Right ventricle myocardium inferior (tissue), 1 donor: ENCODE measurements at regions of chr20 and their contacts with region 1.

Region 1: DNA sequence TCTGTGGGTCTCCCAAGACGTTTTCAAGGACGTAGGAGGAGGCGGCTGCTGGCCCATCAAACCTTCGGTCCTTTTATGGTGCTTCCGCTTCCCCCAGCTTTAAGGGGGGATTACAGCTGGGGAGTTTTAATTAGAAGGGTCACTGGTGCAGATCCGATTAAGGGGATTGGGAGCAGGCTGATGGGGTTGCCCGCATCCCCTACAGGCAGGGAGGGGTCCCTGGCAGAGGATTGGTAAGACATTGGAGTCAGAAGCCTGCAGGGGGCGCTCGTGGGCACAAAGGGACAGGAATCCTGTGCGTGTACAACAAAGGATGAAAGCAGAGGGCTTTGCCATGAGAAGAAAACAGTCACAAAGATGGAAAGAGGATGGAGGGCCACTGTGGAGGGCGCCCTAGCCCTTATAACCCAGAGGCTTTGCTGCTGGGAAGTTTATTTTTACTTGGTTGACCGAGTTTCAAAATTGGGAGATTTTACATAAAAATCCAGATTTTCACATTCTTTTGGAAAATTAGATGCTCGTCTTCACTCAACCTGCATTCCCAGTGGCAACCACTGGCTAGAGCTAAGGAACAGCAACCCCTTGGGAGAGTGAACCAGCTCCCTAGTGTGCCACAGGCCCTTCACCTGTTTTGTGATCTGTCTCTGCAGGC is 97.9 kb downstream of the KCNB1 start:
- DNase-seq: peak; percentile 89
- ATAC-seq: no peak

Region 2: DNA sequence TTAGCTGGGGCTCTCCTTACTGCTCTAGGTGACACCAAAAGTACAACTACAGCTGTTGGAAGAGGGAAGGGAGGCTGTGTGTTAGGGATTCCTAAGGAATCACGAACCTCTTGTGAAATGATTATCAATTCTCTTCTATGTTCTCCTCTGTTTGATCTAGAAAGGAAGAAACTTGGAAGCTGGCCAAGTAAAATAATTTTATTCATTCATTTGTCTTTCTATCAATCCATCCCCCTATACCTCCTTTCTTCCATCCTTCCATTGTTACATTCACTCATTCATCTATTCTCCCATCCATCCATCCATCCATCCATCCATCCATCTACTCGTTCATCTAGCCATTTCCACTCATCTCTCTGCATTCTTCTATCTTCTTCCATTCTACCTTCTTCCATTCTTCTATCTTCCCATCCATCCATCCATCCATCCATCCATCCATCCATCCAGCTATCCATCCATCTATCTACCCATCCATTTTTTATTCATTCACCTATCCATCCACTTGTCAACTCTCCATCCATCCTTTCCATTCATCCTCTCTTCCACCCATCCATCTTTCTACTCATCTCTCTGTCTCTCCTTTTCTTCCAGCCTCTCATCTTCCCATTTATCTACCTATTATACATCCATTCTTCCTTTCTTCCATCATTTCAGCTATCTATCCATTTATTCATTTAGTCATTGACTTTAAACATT is 53.9 kb before region 1 on chr20:
- intact Hi-C with region 1: loop called (anchors 5 kb)
- DNase-seq: no peak
- ATAC-seq: no peak

Region 3: DNA sequence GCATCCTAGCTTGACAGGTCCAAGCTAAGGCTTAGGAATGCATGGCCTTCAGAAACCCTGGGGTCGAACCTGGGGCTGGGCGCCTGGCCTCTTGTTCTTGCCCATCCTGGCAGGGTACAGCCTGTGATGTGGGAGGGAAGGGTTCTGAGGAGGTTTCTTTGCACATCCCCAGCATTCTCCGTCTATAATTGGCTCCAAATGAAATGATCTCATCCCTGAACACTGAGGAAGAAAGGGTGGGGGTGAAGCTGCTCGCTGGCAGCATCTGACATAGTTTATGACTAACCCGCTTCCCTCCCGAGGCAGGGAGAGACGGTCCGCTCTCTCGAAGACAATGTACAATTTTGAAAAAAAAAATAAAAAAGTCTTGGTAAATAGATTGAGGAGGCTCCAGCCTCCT is 39.6 kb before region 1 on chr20:
- intact Hi-C with region 1: no loop called
- DNase-seq: no peak
- ATAC-seq: peak; percentile 92

Region 4: DNA sequence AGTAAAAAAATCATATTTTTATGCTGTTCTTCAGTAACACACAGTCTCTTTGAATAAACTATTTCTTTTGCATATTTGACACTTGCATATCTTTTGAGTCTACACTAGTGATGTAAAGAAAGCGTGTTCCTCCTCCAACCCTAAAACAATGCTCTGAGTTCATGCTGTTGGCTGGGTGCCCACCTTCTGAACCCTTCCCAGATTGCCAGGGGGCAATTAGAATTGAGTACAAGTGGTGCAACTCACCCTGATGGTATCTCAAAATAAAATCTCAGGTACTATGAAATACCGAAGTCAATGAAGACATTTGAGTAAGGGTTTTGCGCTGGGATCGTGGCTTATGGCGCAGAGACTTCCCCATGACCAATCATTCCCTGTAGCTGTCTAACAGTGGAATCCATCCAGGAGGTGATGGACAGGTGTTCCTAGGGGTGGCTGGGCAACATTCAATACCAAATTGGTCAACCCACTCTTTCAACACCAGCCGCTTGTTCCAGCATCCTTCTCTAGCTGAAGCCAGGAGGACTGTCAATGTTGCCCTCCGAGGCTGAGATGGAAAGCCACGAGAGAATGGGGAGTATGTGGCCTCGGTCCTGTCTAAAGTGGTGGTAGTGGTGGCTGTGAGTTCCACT is 12.4 kb before region 1 on chr20:
- intact Hi-C with region 1: no loop called
- DNase-seq: no peak
- ATAC-seq: no peak

Region 5: GRCh38 chr20:49424536-49424935 is 40.0 kb after region 1 on chr20:
- intact Hi-C with region 1: loop called (anchors 2 kb)
- DNase-seq: no peak
- ATAC-seq: no peak

Region 6: GRCh38 chr20:49484180-49485140 is 99.9 kb after region 1 on chr20:
- intact Hi-C with region 1: loop called (anchors 1 kb)
- DNase-seq: peak; percentile 89
- ATAC-seq: peak; percentile 87